ENCODE measurements at regions of chr10 and their contacts with region 1.

Region 1: GRCh38 chr10:104268716-104269645 is at the start of gene GSTO2:
- DNase-seq: peak; percentile 97 to 100 (median 99)
- H3K4me3 ChIP-seq: peak within 1 kb of the TSS; percentile 67 to 89
- H3K4me3 Mint-ChIP-seq: peak within 1 kb of the TSS; percentile 91 to 96 (median 92)
- H3K27ac ChIP-seq: peak within 1 kb of the TSS; percentile 90
- H3K27ac Mint-ChIP-seq: peak within 1 kb of the TSS; percentile 91 to 99 (median 96)
- H3K4me1 ChIP-seq: peaks cover 49% of the 10 kb centered on the region
- H3K4me1 Mint-ChIP-seq: peaks cover 28 to 56% (median 39%) of the 10 kb centered on the region in 4 donors
- H3K27me3 ChIP-seq: no peaks in the 10 kb centered on the region
- H3K27me3 Mint-ChIP-seq: no peaks in the 10 kb centered on the region
- total RNA-seq, gene GSTO2: 1.6 to 2.3 TPM

Region 2: GRCh38 chr10:103966671-103967447 is 302.1 kb before region 1 on chr10 and contains the start of gene SLK:
- CTCF ChIA-PET with region 1: no interaction called
- POLR2A ChIA-PET with region 1: interaction called, 4 read pairs
- intact Hi-C with region 1: loop called (anchors 5 kb)
- DNase-seq: peak; percentile 78 to 90 (median 86)
- H3K4me3 ChIP-seq: peak within 1 kb of the TSS; percentile 59 to 99
- H3K4me3 Mint-ChIP-seq: peak within 1 kb of the TSS; percentile 94 to 100 (median 98)
- H3K27ac ChIP-seq: peak within 1 kb of the TSS; percentile 74
- H3K27ac Mint-ChIP-seq: peak within 1 kb of the TSS; percentile 95 to 98 (median 96)
- H3K4me1 ChIP-seq: peaks cover 33% of the 10 kb centered on the region
- H3K4me1 Mint-ChIP-seq: peaks cover 27 to 48% (median 36%) of the 10 kb centered on the region in 4 donors
- H3K27me3 ChIP-seq: no peaks in the 10 kb centered on the region
- H3K27me3 Mint-ChIP-seq: no peaks in the 10 kb centered on the region
- total RNA-seq, gene SLK: 30.9 to 31.1 TPM

Region 3: DNA sequence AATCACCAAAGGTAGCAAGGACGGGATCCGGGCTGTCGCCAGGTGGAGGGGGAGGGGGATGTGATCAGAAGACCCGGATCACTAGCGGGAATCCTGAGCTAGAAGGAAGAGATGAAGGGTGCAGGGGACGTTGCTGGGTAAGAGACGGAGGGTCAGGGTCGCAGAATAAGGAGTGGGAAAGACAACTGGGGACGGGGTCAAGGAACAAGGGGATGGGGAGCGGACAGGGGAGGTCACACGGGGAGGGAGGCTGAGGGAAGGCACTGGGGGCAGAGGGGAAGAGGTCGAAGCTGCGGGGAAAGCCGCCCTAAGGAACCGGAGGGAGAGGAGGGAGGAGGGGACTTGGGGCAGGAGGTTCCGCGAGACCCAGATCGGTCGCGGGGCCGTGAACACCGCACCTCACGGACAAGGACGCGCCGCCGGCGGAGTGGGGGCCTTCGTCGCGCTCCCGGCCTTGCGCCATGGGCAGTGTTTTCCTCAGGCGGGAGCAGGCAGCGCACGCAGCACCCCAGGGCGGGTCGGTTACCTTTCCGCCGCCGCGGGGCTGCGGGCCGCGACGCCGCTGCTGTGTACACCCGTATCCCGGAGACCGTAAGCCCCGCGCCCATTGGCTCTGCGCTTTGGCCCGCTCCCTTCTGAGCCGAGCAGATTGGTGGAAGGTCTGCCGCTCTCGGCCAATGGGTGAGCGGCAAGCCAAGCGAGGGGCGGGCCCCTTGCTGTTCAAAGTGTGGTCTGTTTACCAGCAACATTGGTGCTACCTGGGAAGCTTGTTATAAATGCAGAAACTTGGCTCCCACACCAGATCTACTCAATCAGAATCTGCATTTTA is 37.0 kb before region 1 on chr10 and contains the start of gene CFAP43:
- CTCF ChIA-PET with region 1: interaction called, 20 read pairs
- POLR2A ChIA-PET with region 1: interaction called, 6 read pairs
- intact Hi-C with region 1: loop called (anchors 1 kb)
- DNase-seq: peak; percentile 99 to 100 (median 99)
- H3K4me3 ChIP-seq: peak within 1 kb of the TSS; percentile 57 to 64
- H3K4me3 Mint-ChIP-seq: peak within 1 kb of the TSS; percentile 84 to 94 (median 90)
- H3K27ac ChIP-seq: peak within 1 kb of the TSS; percentile 49
- H3K27ac Mint-ChIP-seq: peak within 1 kb of the TSS; percentile 82 to 96 (median 92)
- H3K4me1 ChIP-seq: peaks cover 6% of the 10 kb centered on the region
- H3K4me1 Mint-ChIP-seq: peaks cover 6 to 19% (median 11%) of the 10 kb centered on the region in 4 donors
- H3K27me3 ChIP-seq: peaks cover 5% of the 10 kb centered on the region
- H3K27me3 Mint-ChIP-seq: peaks cover 9 to 17% of the 10 kb centered on the region in 2 donors
- total RNA-seq, gene CFAP43: not detected

Region 4: GRCh38 chr10:104254493-104255310 is 14.3 kb before region 1 on chr10 and contains the start of gene GSTO1:
- CTCF ChIA-PET with region 1: interaction called, 73 read pairs
- POLR2A ChIA-PET with region 1: interaction called, 59 read pairs
- intact Hi-C with region 1: loop called (anchors 1 kb)
- DNase-seq: peak in 4 of 5 donors; percentile 22 to 62 (median 31)
- H3K4me3 ChIP-seq: peak within 1 kb of the TSS; percentile 45 to 56
- H3K4me3 Mint-ChIP-seq: peak within 1 kb of the TSS; percentile 84 to 99 (median 98)
- H3K27ac ChIP-seq: peak within 1 kb of the TSS; percentile 75
- H3K27ac Mint-ChIP-seq: peak within 1 kb of the TSS; percentile 82 to 98 (median 96)
- H3K4me1 ChIP-seq: peaks cover 46% of the 10 kb centered on the region
- H3K4me1 Mint-ChIP-seq: peaks cover 36 to 54% (median 44%) of the 10 kb centered on the region in 4 donors
- H3K27me3 ChIP-seq: no peaks in the 10 kb centered on the region
- H3K27me3 Mint-ChIP-seq: peaks cover 0 to 2% of the 10 kb centered on the region in 2 donors
- total RNA-seq, gene GSTO1: 52.8 to 54.7 TPM

Region 5: DNA sequence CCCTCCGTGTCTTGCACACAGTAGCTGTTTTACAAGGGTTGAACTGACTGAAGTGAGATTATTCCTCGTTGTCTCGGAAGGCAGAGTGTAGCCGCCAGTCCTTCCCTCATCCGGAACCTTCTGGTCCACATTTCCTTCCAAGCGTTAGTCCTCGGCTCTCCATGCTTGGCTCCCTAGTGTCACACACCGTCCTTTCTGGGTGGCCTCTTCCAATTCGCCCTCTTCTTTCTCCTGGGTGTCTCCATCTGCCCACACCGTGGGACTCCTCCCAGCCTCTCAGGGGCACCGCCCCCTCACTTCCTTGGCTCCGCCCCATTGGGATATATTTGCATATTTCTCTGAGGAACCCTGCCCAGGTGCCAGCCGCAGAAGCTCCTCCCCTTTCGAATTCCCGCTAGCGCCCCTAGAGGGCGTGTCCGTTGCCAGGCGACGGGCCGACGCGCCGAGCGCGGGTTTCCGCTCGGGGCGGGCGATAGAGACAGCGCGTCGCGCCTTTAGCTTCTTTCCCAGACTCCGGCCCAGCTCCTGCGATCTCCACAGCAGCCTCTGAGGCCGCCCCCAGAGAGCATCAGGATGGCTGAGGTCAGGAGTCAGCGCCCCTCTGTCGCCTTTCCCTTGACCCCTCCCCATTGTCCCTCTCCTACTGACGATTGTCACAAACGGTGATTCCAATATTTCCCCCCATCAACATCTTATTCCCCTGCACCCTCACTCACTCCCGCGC is 84.5 kb after region 1 on chr10 and contains the start of gene CFAP58:
- CTCF ChIA-PET with region 1: interaction called, 55 read pairs
- POLR2A ChIA-PET with region 1: interaction called, 7 read pairs
- intact Hi-C with region 1: no loop called
- DNase-seq: peak; percentile 87 to 91 (median 88)
- H3K4me3 ChIP-seq: peak within 1 kb of the TSS; percentile 17 to 58
- H3K4me3 Mint-ChIP-seq: peak within 1 kb of the TSS in 3 of 8 donors; percentile 41 to 72 (median 61)
- H3K27ac ChIP-seq: peak within 1 kb of the TSS; percentile 18
- H3K27ac Mint-ChIP-seq: peak within 1 kb of the TSS in 4 of 7 donors; percentile 34 to 66 (median 46)
- H3K4me1 ChIP-seq: peaks cover 33% of the 10 kb centered on the region
- H3K4me1 Mint-ChIP-seq: peaks cover 0 to 19% (median 14%) of the 10 kb centered on the region in 4 donors
- H3K27me3 ChIP-seq: no peaks in the 10 kb centered on the region
- H3K27me3 Mint-ChIP-seq: no peaks in the 10 kb centered on the region
- total RNA-seq, gene CFAP58: not detected

Measured in CD4-positive, alpha-beta memory T cell (primary cell).